ENCODE measurements at regions of chr2 and their contacts with region 1.

Region 1: GRCh38 chr2:126634273-126634861 is 21.6 kb upstream of the GYPC start:
- DNase-seq: peak; percentile 39
- ATAC-seq: no peak
- H3K4me3 Mint-ChIP-seq: no peak overlapping the region
- H3K27ac Mint-ChIP-seq: no peak overlapping the region
- H3K4me1 Mint-ChIP-seq: no peaks in the 10 kb centered on the region
- H3K27me3 Mint-ChIP-seq: peaks cover 13% of the 10 kb centered on the region

Region 2: GRCh38 chr2:126653109-126653508 is 18.7 kb after region 1 on chr2:
- CTCF ChIA-PET with region 1: interaction called, 13 read pairs
- POLR2A ChIA-PET with region 1: interaction called, 3 read pairs
- DNase-seq: peak; percentile 15
- ATAC-seq: no peak
- H3K4me3 Mint-ChIP-seq: no peak overlapping the region
- H3K27ac Mint-ChIP-seq: no peak overlapping the region
- H3K4me1 Mint-ChIP-seq: peaks cover 18% of the 10 kb centered on the region
- H3K27me3 Mint-ChIP-seq: no peaks in the 10 kb centered on the region

Region 3: GRCh38 chr2:127208313-127208712 is 573.9 kb after region 1 on chr2:
- CTCF ChIA-PET with region 1: no interaction called
- POLR2A ChIA-PET with region 1: no interaction called
- DNase-seq: no peak
- ATAC-seq: no peak
- H3K4me3 Mint-ChIP-seq: no peak overlapping the region
- H3K27ac Mint-ChIP-seq: no peak overlapping the region
- H3K4me1 Mint-ChIP-seq: no peaks in the 10 kb centered on the region
- H3K27me3 Mint-ChIP-seq: peaks cover 41% of the 10 kb centered on the region

Measured in activated CD8-positive, alpha-beta T cell treated with anti-CD3 and anti-CD28 coated beads, Interleukin-2, amount 10 ng/mL, durations not matched to agents 7 days and 5 days (primary cell).